ENCODE measurements at regions of chrX and their contacts with region 1.

Region 1: DNA sequence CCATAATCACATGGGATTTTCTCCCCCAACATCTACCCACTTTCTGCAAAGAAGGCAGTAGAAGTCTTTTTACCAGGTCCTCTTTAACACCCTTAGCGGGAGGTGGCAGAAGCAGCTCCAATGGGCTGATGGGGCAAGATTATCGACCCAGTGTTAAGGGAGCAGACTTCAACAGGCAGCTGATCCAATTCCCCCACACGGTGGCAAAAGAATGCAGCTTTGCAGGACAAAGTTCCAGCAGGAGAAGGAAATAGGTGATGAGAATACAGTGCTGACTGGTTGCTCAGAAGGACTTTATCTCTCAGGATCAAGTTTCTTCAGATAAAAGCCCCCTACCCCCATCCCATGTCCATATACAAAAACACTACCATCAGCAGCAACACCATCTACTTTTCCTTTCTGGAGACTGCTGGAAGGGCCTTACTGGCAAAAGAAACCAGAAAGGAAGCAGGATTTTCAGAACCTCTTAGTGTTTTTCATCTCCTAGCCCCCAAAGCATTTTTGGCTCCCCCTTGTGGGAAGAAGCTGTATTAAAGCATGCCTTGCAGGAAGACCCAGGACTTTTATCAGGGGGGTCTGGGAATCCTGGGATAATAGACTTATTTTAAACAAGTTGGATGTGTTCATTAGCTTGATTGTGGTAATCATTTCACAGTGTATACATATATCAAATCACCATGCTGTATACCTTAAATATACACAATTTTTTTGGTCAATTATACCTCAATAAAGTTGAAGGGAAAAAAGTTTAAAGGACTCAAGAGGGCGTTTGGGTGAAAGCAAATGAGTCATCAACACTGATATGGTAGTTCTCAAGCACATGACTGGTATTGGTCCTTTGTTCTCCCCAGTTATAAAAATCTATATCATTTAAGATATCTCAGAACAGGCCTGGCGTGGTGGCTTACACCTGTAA is 146.4 kb downstream of the GPC3 start:
- DNase-seq: peak in 8 of 9 donors; percentile 4 to 49 (median 24)
- ATAC-seq: no peak
- H3K4me3 ChIP-seq: no peak overlapping the region
- H3K4me3 Mint-ChIP-seq: no peak overlapping the region
- H3K27ac ChIP-seq: no peak overlapping the region
- H3K27ac Mint-ChIP-seq: no peak overlapping the region
- H3K4me1 ChIP-seq: no peaks in the 10 kb centered on the region
- H3K4me1 Mint-ChIP-seq: no peaks in the 10 kb centered on the region
- H3K27me3 ChIP-seq: no peaks in the 10 kb centered on the region
- H3K27me3 Mint-ChIP-seq: no peaks in the 10 kb centered on the region

Region 2: GRCh38 chrX:133698298-133698697 is 140.7 kb before region 1 on chrX:
- CTCF ChIA-PET with region 1: no interaction called
- POLR2A ChIA-PET with region 1: no interaction called
- intact Hi-C with region 1: loop called in 1 of 2 experiments (anchors 1 kb)
- DNase-seq: peak in 4 of 9 donors; percentile 1 to 29 (median 19)
- ATAC-seq: no peak
- H3K4me3 ChIP-seq: no peak overlapping the region
- H3K4me3 Mint-ChIP-seq: no peak overlapping the region
- H3K27ac ChIP-seq: no peak overlapping the region
- H3K27ac Mint-ChIP-seq: peak overlapping the region in 2 of 9 donors; percentile 36 to 40
- H3K4me1 ChIP-seq: no peaks in the 10 kb centered on the region
- H3K4me1 Mint-ChIP-seq: no peaks in the 10 kb centered on the region
- H3K27me3 ChIP-seq: no peaks in the 10 kb centered on the region
- H3K27me3 Mint-ChIP-seq: no peaks in the 10 kb centered on the region

Region 3: DNA sequence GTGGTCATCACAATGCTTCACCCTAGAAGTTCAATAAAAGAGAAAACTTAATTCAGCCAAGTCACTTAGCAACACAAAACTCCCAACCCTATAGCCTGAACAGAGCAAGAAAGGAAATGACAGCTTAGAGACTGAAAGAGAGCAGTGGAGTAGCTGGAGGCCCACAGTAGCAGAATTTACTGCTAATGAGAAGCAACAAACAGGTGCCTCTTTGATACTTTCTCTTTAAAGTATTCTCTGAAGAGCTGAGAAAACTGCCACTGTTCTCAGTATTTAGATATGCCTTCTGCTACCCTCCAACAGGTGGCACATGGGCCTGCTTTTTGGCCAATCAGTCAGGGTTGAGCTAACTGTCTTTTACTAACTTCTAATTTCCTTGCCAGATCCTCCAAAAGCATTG is 93.7 kb before region 1 on chrX:
- CTCF ChIA-PET with region 1: interaction called, 3 read pairs
- POLR2A ChIA-PET with region 1: no interaction called
- intact Hi-C with region 1: loop called in 1 of 2 experiments (anchors 1 kb)
- DNase-seq: peak in 7 of 9 donors; percentile 30 to 77 (median 59)
- ATAC-seq: peak; percentile 87
- H3K4me3 ChIP-seq: no peak overlapping the region
- H3K4me3 Mint-ChIP-seq: peak overlapping the region in 7 of 10 donors; percentile 7 to 57 (median 36)
- H3K27ac ChIP-seq: peak overlapping the region; percentile 14
- H3K27ac Mint-ChIP-seq: peak overlapping the region in 8 of 9 donors; percentile 71 to 94 (median 80)
- H3K4me1 ChIP-seq: peaks cover 0 to 49% of the 10 kb centered on the region in 2 donors
- H3K4me1 Mint-ChIP-seq: peaks cover 11 to 75% (median 65%) of the 10 kb centered on the region in 7 donors
- H3K27me3 ChIP-seq: no peaks in the 10 kb centered on the region
- H3K27me3 Mint-ChIP-seq: no peaks in the 10 kb centered on the region